GM12878 (cell line): ENCODE measurements at regions of chr11 and their contacts with region 1.

Region 1: GRCh38 chr11:17730608-17731462 is 3.7 kb upstream of the KCNC1 start:
- DNase-seq: peak; percentile 4
- ATAC-seq: peak; percentile 97
- H3K4me3 ChIP-seq: no peak overlapping the region
- H3K27ac ChIP-seq: no peak overlapping the region
- H3K4me1 ChIP-seq: no peaks in the 10 kb centered on the region
- H3K27me3 ChIP-seq: peaks cover 2 to 3% of the 10 kb centered on the region in 2 experiments; a peak in 2 of 4 replicates
- CTCF ChIP-seq: peak; percentile 88 to 97 (median 95)
- EP300 ChIP-seq: no peak
- POLR2A ChIP-seq: no peak
- RAD21 ChIP-seq: peak; percentile 95

Region 2: DNA sequence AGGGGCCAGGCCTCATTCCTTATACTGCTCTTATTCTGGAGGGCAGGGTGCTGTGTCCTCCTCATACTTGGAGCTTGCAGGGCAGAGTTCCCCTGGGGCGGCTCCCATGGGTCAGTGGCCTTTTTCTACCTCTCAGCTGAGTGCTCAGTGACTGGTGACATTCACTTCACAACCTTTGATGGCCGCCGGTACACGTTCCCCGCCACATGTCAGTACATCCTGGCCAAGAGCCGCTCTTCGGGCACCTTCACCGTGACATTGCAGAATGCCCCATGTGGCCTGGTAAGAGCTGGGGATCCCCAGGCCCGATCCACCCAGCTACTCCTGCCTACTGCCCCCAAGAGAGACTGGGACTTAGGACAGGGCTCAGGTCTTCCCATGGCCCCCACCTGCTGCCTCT is 169.3 kb before region 1 on chr11:
- CTCF ChIA-PET with region 1: no interaction called
- POLR2A ChIA-PET with region 1: no interaction called
- RAD21 ChIA-PET with region 1: no interaction called
- SMC1A ChIA-PET with region 1: no interaction called
- in situ Hi-C with region 1: no loop called
- intact Hi-C with region 1: no loop called
- DNase-seq: no peak
- ATAC-seq: no peak
- H3K4me3 ChIP-seq: no peak overlapping the region
- H3K27ac ChIP-seq: no peak overlapping the region
- H3K4me1 ChIP-seq: no peaks in the 10 kb centered on the region
- H3K27me3 ChIP-seq: peaks cover 0 to 1% of the 10 kb centered on the region in 2 experiments; a peak in 1 of 4 replicates
- CTCF ChIP-seq: no peak
- EP300 ChIP-seq: no peak
- POLR2A ChIP-seq: no peak
- RAD21 ChIP-seq: no peak

Region 3: GRCh38 chr11:17598700-17599459 is 132.0 kb before region 1 on chr11:
- CTCF ChIA-PET with region 1: interaction called, 26 read pairs
- POLR2A ChIA-PET with region 1: no interaction called
- RAD21 ChIA-PET with region 1: interaction called, 30 read pairs
- SMC1A ChIA-PET with region 1: interaction called, 10 read pairs
- in situ Hi-C with region 1: no loop called
- intact Hi-C with region 1: loop called (anchors 1 kb)
- DNase-seq: peak; percentile 1
- ATAC-seq: peak; percentile 98
- H3K4me3 ChIP-seq: no peak overlapping the region
- H3K27ac ChIP-seq: no peak overlapping the region
- H3K4me1 ChIP-seq: no peaks in the 10 kb centered on the region
- H3K27me3 ChIP-seq: no peaks in the 10 kb centered on the region; a peak in 1 of 4 replicates
- CTCF ChIP-seq: peak; percentile 95 to 98 (median 98)
- EP300 ChIP-seq: no peak
- POLR2A ChIP-seq: no peak
- RAD21 ChIP-seq: peak; percentile 84

Region 4: GRCh38 chr11:17760102-17761029 is 29.5 kb after region 1 on chr11:
- CTCF ChIA-PET with region 1: interaction called, 22 read pairs
- POLR2A ChIA-PET with region 1: no interaction called
- RAD21 ChIA-PET with region 1: interaction called, 10 read pairs
- SMC1A ChIA-PET with region 1: interaction called, 10 read pairs
- in situ Hi-C with region 1: no loop called
- intact Hi-C with region 1: no loop called
- DNase-seq: peak; percentile 12
- ATAC-seq: peak; percentile 96
- H3K4me3 ChIP-seq: no peak overlapping the region
- H3K27ac ChIP-seq: no peak overlapping the region
- H3K4me1 ChIP-seq: no peaks in the 10 kb centered on the region
- H3K27me3 ChIP-seq: no peaks in the 10 kb centered on the region
- CTCF ChIP-seq: peak; percentile 57 to 71 (median 65)
- EP300 ChIP-seq: no peak
- POLR2A ChIP-seq: no peak
- RAD21 ChIP-seq: peak; percentile 63

Region 5: DNA sequence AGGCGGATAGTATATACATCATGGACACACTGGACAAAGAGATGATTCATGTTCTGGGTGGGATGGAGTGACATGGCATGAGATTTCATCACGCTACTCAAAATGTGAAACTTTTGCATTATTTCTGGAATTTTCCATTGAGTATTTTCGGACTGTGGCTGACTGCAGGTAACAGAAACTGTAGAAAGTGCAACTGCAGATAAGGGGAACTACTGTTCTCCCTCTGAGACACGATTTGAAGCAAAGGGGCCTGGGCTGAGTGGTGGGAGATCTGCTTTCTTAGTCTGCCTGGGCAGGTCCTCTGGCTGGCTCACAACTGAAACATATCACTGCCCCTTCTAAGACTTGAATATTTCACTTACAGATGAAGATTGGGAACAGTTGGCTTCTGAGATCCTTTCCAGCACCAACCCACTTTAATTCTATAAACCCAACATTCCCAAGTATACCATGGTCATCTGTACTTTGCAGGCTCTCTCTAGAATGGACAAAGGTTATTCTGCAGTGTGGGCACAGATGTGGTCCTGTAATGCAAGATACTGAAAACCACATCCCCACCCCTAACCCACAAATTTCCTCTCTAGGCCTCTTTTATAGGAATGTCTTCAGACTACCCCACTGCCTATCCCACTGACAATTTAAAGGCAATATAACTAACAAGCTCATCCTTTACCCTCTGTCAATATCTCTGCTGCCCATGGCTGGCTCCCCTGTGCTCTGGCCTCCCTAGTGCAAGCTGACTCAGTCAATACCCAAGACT is 124.9 kb after region 1 on chr11:
- CTCF ChIA-PET with region 1: interaction called, 11 read pairs
- POLR2A ChIA-PET with region 1: no interaction called
- RAD21 ChIA-PET with region 1: no interaction called
- SMC1A ChIA-PET with region 1: no interaction called
- in situ Hi-C with region 1: no loop called
- intact Hi-C with region 1: no loop called
- DNase-seq: no peak
- ATAC-seq: no peak
- H3K4me3 ChIP-seq: no peak overlapping the region
- H3K27ac ChIP-seq: no peak overlapping the region
- H3K4me1 ChIP-seq: peaks cover 8% of the 10 kb centered on the region
- H3K27me3 ChIP-seq: no peaks in the 10 kb centered on the region
- CTCF ChIP-seq: no peak
- EP300 ChIP-seq: no peak
- POLR2A ChIP-seq: no peak
- RAD21 ChIP-seq: no peak

Region 6: GRCh38 chr11:17914957-17915356 is 184.1 kb after region 1 on chr11:
- CTCF ChIA-PET with region 1: interaction called, 12 read pairs
- POLR2A ChIA-PET with region 1: no interaction called
- RAD21 ChIA-PET with region 1: no interaction called
- SMC1A ChIA-PET with region 1: no interaction called
- in situ Hi-C with region 1: no loop called
- intact Hi-C with region 1: no loop called
- DNase-seq: no peak
- ATAC-seq: no peak
- H3K4me3 ChIP-seq: no peak overlapping the region
- H3K27ac ChIP-seq: no peak overlapping the region
- H3K4me1 ChIP-seq: no peaks in the 10 kb centered on the region
- H3K27me3 ChIP-seq: no peaks in the 10 kb centered on the region
- CTCF ChIP-seq: no peak
- EP300 ChIP-seq: no peak
- POLR2A ChIP-seq: no peak
- RAD21 ChIP-seq: no peak

Region 7: GRCh38 chr11:17978553-17979287 is 247.9 kb after region 1 on chr11:
- CTCF ChIA-PET with region 1: interaction called, 268 read pairs
- POLR2A ChIA-PET with region 1: interaction called, 3 read pairs
- RAD21 ChIA-PET with region 1: interaction called, 76 read pairs
- SMC1A ChIA-PET with region 1: interaction called, 99 read pairs
- in situ Hi-C with region 1: loop called (anchors 5 kb)
- intact Hi-C with region 1: loop called (anchors 1 kb)
- DNase-seq: no peak
- ATAC-seq: peak; percentile 90
- H3K4me3 ChIP-seq: no peak overlapping the region
- H3K27ac ChIP-seq: no peak overlapping the region
- H3K4me1 ChIP-seq: no peaks in the 10 kb centered on the region
- H3K27me3 ChIP-seq: no peaks in the 10 kb centered on the region
- CTCF ChIP-seq: peak; percentile 51 to 75 (median 70)
- EP300 ChIP-seq: no peak
- POLR2A ChIP-seq: no peak
- RAD21 ChIP-seq: peak; percentile 53

Region 8: GRCh38 chr11:17991783-17992433 is 261.1 kb after region 1 on chr11:
- CTCF ChIA-PET with region 1: interaction called, 13 read pairs
- POLR2A ChIA-PET with region 1: no interaction called
- RAD21 ChIA-PET with region 1: interaction called, 15 read pairs
- SMC1A ChIA-PET with region 1: interaction called, 7 read pairs
- in situ Hi-C with region 1: no loop called
- intact Hi-C with region 1: no loop called
- DNase-seq: no peak
- ATAC-seq: peak; percentile 95
- H3K4me3 ChIP-seq: no peak overlapping the region
- H3K27ac ChIP-seq: no peak overlapping the region
- H3K4me1 ChIP-seq: no peaks in the 10 kb centered on the region
- H3K27me3 ChIP-seq: no peaks in the 10 kb centered on the region
- CTCF ChIP-seq: peak; percentile 76 to 83 (median 80)
- EP300 ChIP-seq: no peak
- POLR2A ChIP-seq: no peak
- RAD21 ChIP-seq: peak; percentile 83